GM12878 (cell line): ENCODE measurements at regions of chr17 and their contacts with region 1.

Region 1: DNA sequence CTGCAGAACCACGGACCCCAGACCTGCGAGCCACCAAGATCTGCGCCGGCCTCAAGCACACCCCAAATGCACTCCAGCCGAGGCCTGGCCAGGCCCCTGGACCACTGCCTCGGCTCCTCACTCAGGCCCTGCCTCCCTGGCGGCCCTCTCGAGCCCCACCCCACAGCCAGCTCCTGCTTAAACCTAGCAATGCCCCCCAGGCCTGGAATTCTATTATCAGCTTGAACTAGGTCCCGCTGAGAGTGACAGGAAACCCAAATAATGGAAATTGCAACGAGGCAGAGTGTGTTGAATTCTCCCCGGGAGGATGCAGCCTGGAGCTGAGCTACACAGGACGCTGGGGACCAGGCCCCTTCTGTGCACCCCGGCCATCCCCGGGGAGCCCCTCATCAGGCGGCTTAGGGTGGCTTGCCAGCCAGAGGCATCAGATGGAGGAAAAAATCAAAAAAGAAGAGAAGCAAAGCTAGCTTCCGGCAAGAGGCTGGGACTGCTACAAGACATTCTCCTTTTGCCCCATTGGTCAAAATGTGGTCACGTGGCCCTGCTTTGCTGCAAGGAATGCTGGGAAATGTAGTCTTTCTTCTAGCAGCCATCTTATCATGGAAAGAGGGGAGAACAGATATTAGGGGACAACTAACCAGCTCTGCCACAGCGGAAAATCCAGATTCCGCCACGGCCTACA is 2.4 kb upstream of the ENPP7 start:
- DNase-seq: peak; percentile 86
- ATAC-seq: peak; percentile 84
- H3K4me3 ChIP-seq: peak overlapping the region; percentile 58; the same call in 1 of the 2 replicates
- H3K27ac ChIP-seq: peak overlapping the region; percentile 58; the same call in 1 of the 2 replicates
- H3K4me1 ChIP-seq: peaks cover 3% of the 10 kb centered on the region
- H3K27me3 ChIP-seq: no peaks in the 10 kb centered on the region
- CTCF ChIP-seq: no peak
- EP300 ChIP-seq: no peak
- POLR2A ChIP-seq: no peak
- RAD21 ChIP-seq: no peak

Region 2: DNA sequence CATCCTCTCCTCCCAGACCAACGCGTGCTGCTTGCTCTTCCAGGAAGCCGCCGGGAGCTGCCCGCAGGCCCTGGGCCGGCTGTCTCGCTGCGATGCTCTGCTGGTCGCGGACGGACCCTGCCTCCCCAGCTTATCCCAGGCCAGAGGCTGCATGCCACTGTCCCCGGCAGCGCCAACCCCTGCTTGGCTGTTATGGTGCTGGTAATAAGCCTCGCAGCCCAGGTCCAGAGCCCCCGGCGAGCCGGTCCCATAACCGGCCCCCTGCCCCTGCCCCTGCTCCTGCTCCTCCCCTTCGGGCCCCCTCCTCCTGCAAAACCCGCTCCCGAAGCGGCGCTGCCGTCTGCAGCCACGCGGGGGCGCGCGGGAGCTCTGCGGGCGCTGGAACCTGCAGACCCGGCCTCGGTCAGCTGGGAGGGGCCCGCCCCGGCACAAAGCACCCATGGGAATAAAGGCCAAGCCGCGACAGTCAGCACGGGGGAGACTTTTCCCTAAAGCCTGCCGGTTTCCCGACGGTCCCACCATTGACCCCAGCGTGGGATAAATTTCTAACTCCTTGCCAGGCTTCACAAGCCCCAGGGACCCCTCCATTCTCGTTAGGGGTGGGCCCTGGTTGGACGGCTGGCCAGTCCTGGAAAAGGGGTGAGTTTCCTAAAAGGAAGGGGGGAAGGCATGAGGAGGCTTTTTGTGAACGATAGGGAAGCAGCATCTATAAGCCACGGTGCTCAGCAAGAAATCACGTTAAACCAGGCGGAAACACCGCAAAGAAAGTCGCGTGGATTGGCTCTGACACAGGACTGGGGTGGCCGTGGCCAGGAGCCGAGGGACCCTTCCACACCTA is 13.6 kb after region 1 on chr17:
- CTCF ChIA-PET with region 1: interaction called, 16 read pairs
- POLR2A ChIA-PET with region 1: interaction called, 9 read pairs
- RAD21 ChIA-PET with region 1: interaction called, 3 read pairs
- SMC1A ChIA-PET with region 1: interaction called, 3 read pairs
- in situ Hi-C with region 1: no loop called
- intact Hi-C with region 1: no loop called
- DNase-seq: no peak
- ATAC-seq: peak; percentile 83
- H3K4me3 ChIP-seq: no peak overlapping the region
- H3K27ac ChIP-seq: no peak overlapping the region
- H3K4me1 ChIP-seq: peaks cover 10% of the 10 kb centered on the region
- H3K27me3 ChIP-seq: peaks cover 0 to 7% of the 10 kb centered on the region in 2 experiments; a peak in 3 of 4 replicates
- CTCF ChIP-seq: peak; percentile 84 to 95 (median 89)
- EP300 ChIP-seq: no peak
- POLR2A ChIP-seq: no peak
- RAD21 ChIP-seq: peak; percentile 66

Region 3: GRCh38 chr17:79923974-79924638 is 195.7 kb after region 1 on chr17:
- CTCF ChIA-PET with region 1: no interaction called
- POLR2A ChIA-PET with region 1: no interaction called
- RAD21 ChIA-PET with region 1: no interaction called
- SMC1A ChIA-PET with region 1: no interaction called
- in situ Hi-C with region 1: no loop called
- intact Hi-C with region 1: no loop called
- DNase-seq: no peak
- ATAC-seq: 0 out of 3 replicates have a peak, but pooled peaks have one; percentile 16
- H3K4me3 ChIP-seq: no peak overlapping the region
- H3K27ac ChIP-seq: no peak overlapping the region
- H3K4me1 ChIP-seq: peaks cover 21% of the 10 kb centered on the region
- H3K27me3 ChIP-seq: no peaks in the 10 kb centered on the region; a peak in 1 of 4 replicates
- CTCF ChIP-seq: peak; percentile 34 to 65 (median 53)
- EP300 ChIP-seq: no peak
- POLR2A ChIP-seq: no peak
- RAD21 ChIP-seq: peak; percentile 47